HEK293 (cell line): ENCODE measurements at regions of chr2 and their contacts with region 1.

Region 1: GRCh38 chr2:27080603-27080936 is 2.2 kb downstream of the EMILIN1 start:
- H3K4me3 ChIP-seq: no peak overlapping the region
- H3K27ac ChIP-seq: no peak overlapping the region
- H3K4me1 ChIP-seq: peaks cover 5% of the 10 kb centered on the region
- CTCF ChIP-seq: no peak

Region 2: DNA sequence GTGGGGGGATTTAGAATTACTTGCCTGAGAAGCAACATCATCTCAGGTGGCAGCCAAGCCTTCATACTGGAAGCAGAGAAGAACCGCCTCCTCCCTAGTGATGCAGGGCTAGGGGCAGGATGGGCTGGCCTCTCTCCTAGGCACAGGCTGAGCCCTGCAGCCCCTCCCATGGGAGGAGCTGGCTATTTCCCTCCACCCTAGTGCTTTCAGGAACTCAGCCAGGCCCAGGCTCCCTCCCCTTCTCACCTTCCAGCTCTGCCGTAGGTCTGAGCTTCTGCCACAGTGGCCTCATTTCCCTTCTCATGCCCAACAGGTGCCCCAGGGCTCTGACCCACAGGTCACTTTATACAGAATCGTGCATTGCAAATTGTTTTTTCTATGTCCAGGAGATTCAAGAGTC is 263.7 kb before region 1 on chr2:
- CTCF ChIA-PET with region 1: no interaction called
- POLR2A ChIA-PET with region 1: no interaction called
- H3K4me3 ChIP-seq: no peak overlapping the region
- H3K27ac ChIP-seq: no peak overlapping the region
- H3K4me1 ChIP-seq: no peaks in the 10 kb centered on the region
- CTCF ChIP-seq: no peak

Region 3: DNA sequence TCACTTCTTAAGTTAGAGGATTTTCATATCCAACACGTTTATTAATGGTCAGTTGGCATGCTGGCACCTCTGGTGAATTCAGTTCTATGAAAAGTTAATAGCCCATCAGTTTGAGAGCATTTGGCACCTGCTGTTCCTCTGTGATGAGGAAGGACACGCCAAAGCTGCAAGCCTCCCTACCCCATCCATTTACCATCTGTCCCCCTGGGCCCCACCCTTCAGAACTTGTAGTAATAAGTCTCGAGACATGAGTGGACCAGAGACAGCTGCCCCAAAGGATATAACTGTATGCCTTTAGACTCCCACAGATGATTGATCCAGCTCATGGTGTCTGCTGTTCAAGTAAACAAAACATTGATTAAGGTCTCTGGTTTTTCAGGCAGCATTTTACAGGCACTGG is 15.4 kb before region 1 on chr2:
- CTCF ChIA-PET with region 1: interaction called, 3 read pairs
- POLR2A ChIA-PET with region 1: interaction called, 10 read pairs
- H3K4me3 ChIP-seq: no peak overlapping the region
- H3K27ac ChIP-seq: no peak overlapping the region
- H3K4me1 ChIP-seq: 0 out of 2 replicates have a peak, but pooled peaks cover under 1% of the 10 kb centered on the region
- CTCF ChIP-seq: no peak

Region 4: DNA sequence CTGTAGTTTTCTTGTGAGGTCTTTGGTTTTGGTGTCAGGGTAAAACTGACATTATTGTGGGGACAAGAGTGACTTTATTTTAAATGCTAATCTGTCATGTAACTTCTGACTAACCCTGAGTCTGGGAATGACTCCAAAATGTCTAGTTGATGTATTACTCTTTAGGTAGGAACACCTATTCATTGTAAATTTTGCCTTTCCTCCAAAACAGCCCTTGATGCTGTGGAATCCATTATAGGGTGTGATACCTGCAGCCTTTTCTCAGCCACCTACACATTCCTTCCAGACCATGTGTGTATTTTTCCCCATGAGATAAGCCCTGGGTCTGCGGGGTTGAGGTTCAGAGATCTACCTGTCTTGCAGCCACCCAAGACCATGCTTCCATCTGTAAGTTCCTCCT is 62.7 kb after region 1 on chr2:
- CTCF ChIA-PET with region 1: no interaction called
- POLR2A ChIA-PET with region 1: no interaction called
- H3K4me3 ChIP-seq: no peak overlapping the region
- H3K27ac ChIP-seq: no peak overlapping the region
- H3K4me1 ChIP-seq: no peaks in the 10 kb centered on the region
- CTCF ChIP-seq: no peak